ENCODE measurements at regions of chr22 and their contacts with region 1.

Region 1: GRCh38 chr22:32904044-32904443 is 102.5 kb downstream of the TIMP3 start:
- DNase-seq: no peak
- H3K4me3 ChIP-seq: no peak overlapping the region
- H3K27ac ChIP-seq: no peak overlapping the region
- H3K4me1 ChIP-seq: no peaks in the 10 kb centered on the region
- H3K27me3 ChIP-seq: no peaks in the 10 kb centered on the region
- CTCF ChIP-seq: no peak
- POLR2A ChIP-seq: no peak

Region 2: DNA sequence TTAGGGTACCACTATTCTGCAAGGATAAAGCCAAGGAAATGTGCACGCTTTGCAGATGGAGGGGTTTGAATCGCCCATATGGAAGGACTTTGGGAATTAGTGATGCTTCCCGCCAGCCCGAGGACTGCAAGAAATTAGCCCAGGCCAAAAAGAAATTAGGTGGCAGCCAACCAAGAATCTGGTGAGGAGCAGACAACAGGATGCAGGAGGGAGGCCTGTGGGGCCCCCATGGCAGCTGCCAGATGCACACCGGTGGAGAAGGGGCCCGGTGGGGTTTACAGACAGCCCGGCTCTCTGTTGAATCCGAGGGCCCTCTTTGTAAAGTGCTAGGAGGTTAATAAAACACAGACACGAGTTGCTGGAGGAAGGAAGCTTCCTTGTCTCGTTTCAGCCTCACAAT is 29.1 kb before region 1 on chr22:
- intact Hi-C with region 1: loop called (anchors 1 kb)
- DNase-seq: no peak
- H3K4me3 ChIP-seq: no peak overlapping the region
- H3K27ac ChIP-seq: no peak overlapping the region
- H3K4me1 ChIP-seq: no peaks in the 10 kb centered on the region
- H3K27me3 ChIP-seq: no peaks in the 10 kb centered on the region
- CTCF ChIP-seq: no peak
- POLR2A ChIP-seq: no peak

Measured in breast epithelium (tissue), 4 donors.